H1 (cell line): ENCODE measurements at regions of chr13 and their contacts with region 1.

Region 1: DNA sequence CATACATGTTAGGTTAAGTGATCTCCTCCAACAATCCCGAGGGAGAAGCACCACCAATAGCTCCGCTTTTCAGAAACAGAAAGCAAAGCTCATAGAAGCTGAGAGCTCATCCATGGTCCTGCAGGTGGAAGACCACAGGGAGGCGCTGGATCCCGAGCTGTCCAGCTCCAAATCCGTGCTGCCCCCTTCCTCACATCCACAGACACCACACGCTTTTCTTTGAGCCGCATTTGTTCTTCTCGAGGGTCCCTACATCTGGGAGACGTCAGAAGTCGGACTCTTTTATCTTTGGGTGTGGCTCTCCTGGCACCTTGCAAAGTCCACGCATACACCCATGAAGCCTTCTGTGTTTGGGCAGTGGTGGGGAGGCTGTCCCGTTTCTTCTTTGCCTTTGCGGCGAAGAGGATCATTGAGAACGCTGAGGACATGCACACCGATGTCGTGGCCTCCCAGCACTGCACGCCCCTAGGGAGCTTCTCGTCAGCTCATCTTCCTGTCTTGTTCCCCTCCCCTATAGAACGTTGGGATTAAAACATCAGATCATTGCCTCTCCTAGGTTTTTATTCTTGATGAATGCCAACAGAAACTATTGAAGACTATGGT is 184.8 kb downstream of the TEX29 start:
- DNase-seq: peak; percentile 59 to 77
- H3K4me3 ChIP-seq: no peak overlapping the region
- H3K27ac ChIP-seq: no peak overlapping the region
- H3K4me1 ChIP-seq: no peaks in the 10 kb centered on the region
- H3K27me3 ChIP-seq: no peaks in the 10 kb centered on the region
- CTCF ChIP-seq: peak in 2 of 3 experiments; percentile 98 to 100; a peak in 3 of 4 replicates
- EP300 ChIP-seq: no peak
- POLR2A ChIP-seq: no peak
- RAD21 ChIP-seq: peak; percentile 93 to 95

Region 2: GRCh38 chr13:111429064-111429558 is 76.2 kb before region 1 on chr13:
- CTCF ChIA-PET with region 1: no interaction called
- POLR2A ChIA-PET with region 1: no interaction called
- DNase-seq: peak in 1 of 2 experiments; percentile 88
- H3K4me3 ChIP-seq: peak overlapping the region; percentile 66 to 79 (median 71)
- H3K27ac ChIP-seq: no peak overlapping the region
- H3K4me1 ChIP-seq: peaks cover 0 to 4% (median 0%) of the 10 kb centered on the region in 4 experiments; a peak in 1 of 7 replicates
- H3K27me3 ChIP-seq: no peaks in the 10 kb centered on the region; a peak in 1 of 7 replicates
- CTCF ChIP-seq: peak; percentile 57 to 65 (median 57)
- EP300 ChIP-seq: no peak
- POLR2A ChIP-seq: no peak
- RAD21 ChIP-seq: peak; percentile 18 to 39; a peak in 2 of 4 replicates

Region 3: GRCh38 chr13:111491021-111491420 is 14.3 kb before region 1 on chr13:
- CTCF ChIA-PET with region 1: interaction called, 35 read pairs
- POLR2A ChIA-PET with region 1: no interaction called
- DNase-seq: no peak
- H3K4me3 ChIP-seq: no peak overlapping the region
- H3K27ac ChIP-seq: no peak overlapping the region
- H3K4me1 ChIP-seq: 0 out of 7 replicates have a peak, but pooled peaks cover 0 to 6% (median 0%) of the 10 kb centered on the region in 4 experiments
- H3K27me3 ChIP-seq: no peaks in the 10 kb centered on the region
- CTCF ChIP-seq: no peak
- EP300 ChIP-seq: no peak
- POLR2A ChIP-seq: no peak
- RAD21 ChIP-seq: no peak

Region 4: GRCh38 chr13:111521030-111521429 is 15.8 kb after region 1 on chr13:
- CTCF ChIA-PET with region 1: interaction called, 11 read pairs
- POLR2A ChIA-PET with region 1: no interaction called
- DNase-seq: no peak
- H3K4me3 ChIP-seq: no peak overlapping the region
- H3K27ac ChIP-seq: no peak overlapping the region
- H3K4me1 ChIP-seq: peaks cover 0 to 4% (median 1%) of the 10 kb centered on the region in 4 experiments; a peak in 3 of 7 replicates
- H3K27me3 ChIP-seq: no peaks in the 10 kb centered on the region
- CTCF ChIP-seq: no peak
- EP300 ChIP-seq: no peak
- POLR2A ChIP-seq: no peak
- RAD21 ChIP-seq: no peak

Region 5: GRCh38 chr13:111531505-111531904 is 26.2 kb after region 1 on chr13:
- CTCF ChIA-PET with region 1: interaction called, 25 read pairs
- POLR2A ChIA-PET with region 1: no interaction called
- DNase-seq: no peak
- H3K4me3 ChIP-seq: peak overlapping the region in 1 of 4 experiments; percentile 40; a peak in 1 of 8 replicates
- H3K27ac ChIP-seq: no peak overlapping the region
- H3K4me1 ChIP-seq: peaks cover 10 to 47% (median 29%) of the 10 kb centered on the region in 4 experiments
- H3K27me3 ChIP-seq: peaks cover 0 to 34% (median 26%) of the 10 kb centered on the region in 4 experiments; a peak in 5 of 7 replicates
- CTCF ChIP-seq: no peak
- EP300 ChIP-seq: no peak
- POLR2A ChIP-seq: no peak
- RAD21 ChIP-seq: peak in 1 of 2 experiments; percentile 7; a peak in 1 of 4 replicates